Activated B cell treated with CpG ODN at 0.5 μM for 24 hours (primary cell): ENCODE measurements at regions of chr3 and their contacts with region 1.

Region 1: GRCh38 chr3:168095611-168096209 is at the start of gene GOLIM4:
- DNase-seq: peak; percentile 82
- ATAC-seq: peak; percentile 85
- H3K4me3 Mint-ChIP-seq: peak within 1 kb of the TSS; percentile 85
- H3K27ac Mint-ChIP-seq: peak within 1 kb of the TSS; percentile 83
- H3K4me1 Mint-ChIP-seq: peaks cover 25% of the 10 kb centered on the region
- H3K27me3 Mint-ChIP-seq: peaks cover 2% of the 10 kb centered on the region
- CTCF ChIP-seq: no peak
- total RNA-seq, gene GOLIM4: 8.0 and 8.5 TPM in 2 replicates

Region 2: GRCh38 chr3:167380004-167380689 is 715.6 kb before region 1 on chr3 and contains the start of gene ZBBX:
- CTCF ChIA-PET with region 1: no interaction called
- POLR2A ChIA-PET with region 1: no interaction called
- intact Hi-C with region 1: loop called (anchors 5 kb)
- DNase-seq: peak; percentile 79
- ATAC-seq: peak; percentile 95
- H3K4me3 Mint-ChIP-seq: peak within 1 kb of the TSS; percentile 86
- H3K27ac Mint-ChIP-seq: peak within 1 kb of the TSS; percentile 53
- H3K4me1 Mint-ChIP-seq: peaks cover 6% of the 10 kb centered on the region
- H3K27me3 Mint-ChIP-seq: peaks cover 3% of the 10 kb centered on the region
- CTCF ChIP-seq: peak; percentile 38
- total RNA-seq, gene ZBBX: not detected in 2 replicates

Region 3: DNA sequence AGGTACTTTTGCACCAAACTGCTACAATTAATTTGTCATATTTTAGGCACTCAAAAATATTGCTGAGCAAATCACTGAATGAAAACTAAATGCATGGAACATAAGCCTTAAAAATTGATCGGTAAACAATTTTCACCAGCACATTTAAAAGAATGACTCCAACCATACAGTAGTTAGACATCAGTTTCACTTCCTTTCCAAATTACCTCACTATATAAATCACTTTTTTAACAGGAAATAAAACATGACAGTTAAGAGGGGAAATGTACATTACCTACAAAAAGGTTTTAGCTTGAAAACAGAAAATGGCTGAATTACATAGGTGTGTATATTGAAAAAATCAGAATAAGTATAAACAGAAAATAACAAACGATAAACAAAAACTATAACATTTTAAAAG is 251.8 kb before region 1 on chr3:
- CTCF ChIA-PET with region 1: no interaction called
- POLR2A ChIA-PET with region 1: no interaction called
- intact Hi-C with region 1: loop called (anchors 5 kb)
- DNase-seq: no peak
- ATAC-seq: peak; percentile 79
- H3K4me3 Mint-ChIP-seq: peak overlapping the region; percentile 38
- H3K27ac Mint-ChIP-seq: peak overlapping the region; percentile 46
- H3K4me1 Mint-ChIP-seq: peaks cover 34% of the 10 kb centered on the region
- H3K27me3 Mint-ChIP-seq: no peaks in the 10 kb centered on the region
- CTCF ChIP-seq: no peak

Region 4: GRCh38 chr3:167899093-167899492 is 196.6 kb before region 1 on chr3:
- CTCF ChIA-PET with region 1: no interaction called
- POLR2A ChIA-PET with region 1: no interaction called
- intact Hi-C with region 1: no loop called
- DNase-seq: no peak
- ATAC-seq: no peak
- H3K4me3 Mint-ChIP-seq: no peak overlapping the region
- H3K27ac Mint-ChIP-seq: no peak overlapping the region
- H3K4me1 Mint-ChIP-seq: no peaks in the 10 kb centered on the region
- H3K27me3 Mint-ChIP-seq: peaks cover 5% of the 10 kb centered on the region
- CTCF ChIP-seq: no peak

Region 5: DNA sequence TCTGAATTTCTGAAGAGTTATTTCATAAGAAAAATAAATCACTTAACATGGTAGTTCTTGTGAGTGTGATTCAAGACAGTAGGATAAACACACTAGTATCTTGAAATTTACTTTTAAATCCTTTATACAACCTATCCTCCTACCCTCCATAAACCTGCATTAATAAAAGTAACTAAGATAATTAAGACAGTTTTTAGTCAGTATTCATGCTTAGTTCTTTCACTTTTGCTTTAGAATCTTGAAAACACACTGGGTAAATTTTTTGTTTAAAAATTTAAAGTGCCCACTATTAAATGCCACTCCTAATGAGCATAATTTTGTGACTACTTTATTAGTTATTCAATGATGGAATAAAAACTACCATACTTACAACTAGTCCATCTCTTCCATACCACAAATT is 28.8 kb before region 1 on chr3:
- CTCF ChIA-PET with region 1: no interaction called
- POLR2A ChIA-PET with region 1: no interaction called
- intact Hi-C with region 1: loop called (anchors 2 kb)
- DNase-seq: no peak
- ATAC-seq: no peak
- H3K4me3 Mint-ChIP-seq: no peak overlapping the region
- H3K27ac Mint-ChIP-seq: no peak overlapping the region
- H3K4me1 Mint-ChIP-seq: peaks cover 19% of the 10 kb centered on the region
- H3K27me3 Mint-ChIP-seq: no peaks in the 10 kb centered on the region
- CTCF ChIP-seq: no peak

Region 6: DNA sequence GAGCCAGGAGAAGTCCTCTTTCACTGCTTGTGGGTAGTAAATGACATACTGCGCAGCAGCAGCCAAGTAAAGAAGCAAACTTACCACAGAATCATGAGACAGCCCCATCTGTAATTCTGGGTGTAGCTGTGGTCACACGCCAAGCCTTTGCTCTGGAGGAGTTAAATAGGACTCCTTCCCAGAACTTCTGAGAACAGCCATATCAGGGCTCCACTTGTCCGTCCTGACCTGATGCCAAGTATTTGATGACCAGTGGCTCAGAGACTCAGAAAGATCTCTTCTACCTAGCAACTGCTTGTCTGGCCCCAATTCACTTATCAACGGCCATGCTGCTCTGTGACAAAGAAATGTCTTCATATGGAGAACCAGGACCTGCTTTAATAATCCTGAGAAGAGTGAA is 20.6 kb after region 1 on chr3:
- CTCF ChIA-PET with region 1: no interaction called
- POLR2A ChIA-PET with region 1: no interaction called
- intact Hi-C with region 1: no loop called
- DNase-seq: no peak
- ATAC-seq: no peak
- H3K4me3 Mint-ChIP-seq: no peak overlapping the region
- H3K27ac Mint-ChIP-seq: no peak overlapping the region
- H3K4me1 Mint-ChIP-seq: no peaks in the 10 kb centered on the region
- H3K27me3 Mint-ChIP-seq: no peaks in the 10 kb centered on the region
- CTCF ChIP-seq: no peak

Region 7: DNA sequence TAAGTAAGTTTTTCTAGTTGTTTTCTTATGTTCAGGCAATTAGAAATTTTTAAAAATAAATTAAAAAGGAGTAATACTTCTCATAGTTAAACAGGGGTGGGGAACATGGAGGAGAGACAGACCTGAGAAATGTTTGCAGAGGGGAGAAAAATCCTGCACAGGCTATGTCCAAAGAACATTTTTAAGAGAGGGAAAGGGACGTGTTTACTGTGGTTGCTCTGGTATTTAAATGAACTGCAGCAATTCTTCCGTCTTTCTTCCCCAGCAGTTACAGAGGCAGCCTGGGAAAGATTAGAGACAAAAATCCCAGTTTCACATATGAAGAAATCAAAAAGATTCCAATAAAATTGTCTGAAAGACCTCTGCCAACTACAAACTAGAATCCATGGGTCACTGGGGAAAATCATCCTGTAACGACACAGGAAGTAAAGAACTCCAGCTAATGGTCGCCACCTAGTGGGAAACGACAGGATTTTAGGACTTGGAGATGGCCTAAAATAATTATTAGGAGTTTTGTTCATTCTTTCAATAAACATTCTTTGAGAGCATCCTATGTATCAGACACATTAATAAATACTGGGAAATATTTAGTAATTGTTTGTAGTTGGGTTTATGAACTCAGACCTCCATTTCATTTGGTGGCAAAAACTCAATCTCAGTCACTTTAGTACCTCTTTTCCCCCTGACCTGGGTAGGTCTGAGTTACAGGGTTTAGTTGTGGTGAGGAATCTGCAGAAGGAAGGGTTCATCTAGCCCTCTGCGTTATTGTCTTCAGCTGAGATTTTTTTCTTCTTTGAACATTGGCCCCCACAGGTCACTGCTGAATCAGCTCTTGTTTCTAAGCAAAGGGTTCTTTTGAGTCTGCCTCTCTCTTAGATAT is 69.9 kb after region 1 on chr3:
- CTCF ChIA-PET with region 1: interaction called, 5 read pairs
- POLR2A ChIA-PET with region 1: no interaction called
- intact Hi-C with region 1: loop called (anchors 1 kb)
- DNase-seq: no peak
- ATAC-seq: peak; percentile 68
- H3K4me3 Mint-ChIP-seq: peak overlapping the region; percentile 57
- H3K27ac Mint-ChIP-seq: no peak overlapping the region
- H3K4me1 Mint-ChIP-seq: peaks cover 6% of the 10 kb centered on the region
- H3K27me3 Mint-ChIP-seq: no peaks in the 10 kb centered on the region
- CTCF ChIP-seq: peak; percentile 26

Region 8: DNA sequence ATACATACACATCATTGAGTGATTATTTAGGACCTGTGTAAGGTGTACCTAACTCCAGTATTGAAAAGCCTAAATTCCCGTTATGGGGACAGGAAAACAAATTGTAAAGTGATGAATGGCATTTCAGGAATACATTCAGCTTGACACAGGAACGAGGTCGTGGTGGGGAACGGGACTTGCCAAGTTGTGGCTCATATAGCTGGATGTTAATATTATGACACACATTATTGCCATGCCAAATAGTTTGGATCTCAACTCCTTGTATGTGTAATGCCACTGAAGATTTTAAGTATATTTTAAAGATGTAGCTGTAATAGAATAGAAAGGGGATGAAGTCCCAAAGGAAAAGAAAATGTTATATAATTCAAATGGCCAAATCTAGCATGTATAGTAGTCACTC is 227.2 kb after region 1 on chr3:
- CTCF ChIA-PET with region 1: no interaction called
- POLR2A ChIA-PET with region 1: no interaction called
- intact Hi-C with region 1: no loop called
- DNase-seq: no peak
- ATAC-seq: no peak
- H3K4me3 Mint-ChIP-seq: no peak overlapping the region
- H3K27ac Mint-ChIP-seq: no peak overlapping the region
- H3K4me1 Mint-ChIP-seq: no peaks in the 10 kb centered on the region
- H3K27me3 Mint-ChIP-seq: no peaks in the 10 kb centered on the region
- CTCF ChIP-seq: no peak